ENCODE measurements at regions of chr12 and their contacts with region 1.

Region 1: GRCh38 chr12:55973598-55974307 is at the start of gene RAB5B:
- DNase-seq: peak; percentile 100
- ATAC-seq: peak; percentile 96
- H3K4me3 Mint-ChIP-seq: no peak within 1 kb of the TSS
- H3K27ac Mint-ChIP-seq: no peak within 1 kb of the TSS
- H3K4me1 Mint-ChIP-seq: peaks cover 17% of the 10 kb centered on the region
- H3K27me3 Mint-ChIP-seq: no peaks in the 10 kb centered on the region
- total RNA-seq, gene RAB5B: 51.9 to 52.9 TPM

Region 2: DNA sequence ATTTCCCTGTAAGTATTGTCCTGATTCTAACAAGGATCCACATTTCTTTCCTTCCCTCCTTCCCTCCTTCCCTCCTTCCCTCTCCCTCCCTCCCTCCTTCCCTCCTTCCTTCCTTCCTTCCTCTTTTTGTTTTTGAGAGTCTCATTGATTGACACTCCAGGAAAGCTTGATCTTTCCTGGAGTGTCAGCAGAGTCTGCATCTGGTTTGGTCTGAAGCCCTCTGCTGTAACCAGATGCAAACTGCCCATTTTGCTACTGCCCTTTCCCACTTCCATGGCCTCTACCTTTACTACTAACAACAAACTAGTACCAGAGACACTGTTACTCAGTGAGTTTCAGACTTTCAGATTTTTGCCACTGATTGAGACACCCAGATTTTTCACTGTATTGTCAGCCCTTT is 587.8 kb before region 1 on chr12:
- CTCF ChIA-PET with region 1: no interaction called
- POLR2A ChIA-PET with region 1: no interaction called
- DNase-seq: no peak
- ATAC-seq: no peak
- H3K4me3 Mint-ChIP-seq: no peak overlapping the region
- H3K27ac Mint-ChIP-seq: no peak overlapping the region
- H3K4me1 Mint-ChIP-seq: no peaks in the 10 kb centered on the region
- H3K27me3 Mint-ChIP-seq: no peaks in the 10 kb centered on the region

Region 3: DNA sequence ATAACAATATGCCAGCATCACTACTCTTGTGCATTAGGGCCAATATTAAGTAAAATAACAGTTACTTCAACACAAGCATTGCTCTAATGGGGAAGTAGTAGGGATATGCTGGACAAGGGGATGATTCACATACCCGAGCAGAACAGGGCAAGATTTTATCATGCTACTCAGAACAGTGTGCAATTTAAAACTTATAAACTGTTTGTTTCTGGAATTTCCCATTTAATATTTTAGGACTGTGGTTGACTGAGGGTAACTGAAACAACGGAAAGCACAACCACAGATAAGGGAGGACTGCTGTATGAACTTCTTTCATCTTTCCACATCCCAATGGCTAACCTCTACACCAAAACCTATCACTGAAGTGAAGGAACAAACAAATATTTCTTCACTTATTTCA is 193.1 kb before region 1 on chr12:
- CTCF ChIA-PET with region 1: no interaction called
- POLR2A ChIA-PET with region 1: no interaction called
- DNase-seq: no peak
- ATAC-seq: no peak
- H3K4me3 Mint-ChIP-seq: no peak overlapping the region
- H3K27ac Mint-ChIP-seq: peak overlapping the region; percentile 39
- H3K4me1 Mint-ChIP-seq: peaks cover 10% of the 10 kb centered on the region
- H3K27me3 Mint-ChIP-seq: no peaks in the 10 kb centered on the region

Region 4: GRCh38 chr12:55817346-55818139 is 156.2 kb before region 1 on chr12 and contains the starts of genes ORMDL2 and SARNP:
- CTCF ChIA-PET with region 1: interaction called, 5 read pairs
- POLR2A ChIA-PET with region 1: interaction called, 14 read pairs
- DNase-seq: peak; percentile 99
- ATAC-seq: peak; percentile 98
- H3K4me3 Mint-ChIP-seq: no peak within 1 kb of the TSS
- H3K27ac Mint-ChIP-seq: no peak within 1 kb of the TSS
- H3K4me1 Mint-ChIP-seq: peaks cover 46% of the 10 kb centered on the region
- H3K27me3 Mint-ChIP-seq: no peaks in the 10 kb centered on the region
- total RNA-seq, gene ORMDL2: 55.2 to 57.9 TPM
- total RNA-seq, gene SARNP: 91.1 to 94.8 TPM

Region 5: GRCh38 chr12:55926738-55927587 is 46.8 kb before region 1 on chr12:
- CTCF ChIA-PET with region 1: interaction called, 13 read pairs
- POLR2A ChIA-PET with region 1: interaction called, 7 read pairs
- DNase-seq: peak; percentile 97
- ATAC-seq: peak; percentile 43
- H3K4me3 Mint-ChIP-seq: peak overlapping the region; percentile 95
- H3K27ac Mint-ChIP-seq: peak overlapping the region; percentile 99
- H3K4me1 Mint-ChIP-seq: peaks cover 43% of the 10 kb centered on the region
- H3K27me3 Mint-ChIP-seq: no peaks in the 10 kb centered on the region

Region 6: DNA sequence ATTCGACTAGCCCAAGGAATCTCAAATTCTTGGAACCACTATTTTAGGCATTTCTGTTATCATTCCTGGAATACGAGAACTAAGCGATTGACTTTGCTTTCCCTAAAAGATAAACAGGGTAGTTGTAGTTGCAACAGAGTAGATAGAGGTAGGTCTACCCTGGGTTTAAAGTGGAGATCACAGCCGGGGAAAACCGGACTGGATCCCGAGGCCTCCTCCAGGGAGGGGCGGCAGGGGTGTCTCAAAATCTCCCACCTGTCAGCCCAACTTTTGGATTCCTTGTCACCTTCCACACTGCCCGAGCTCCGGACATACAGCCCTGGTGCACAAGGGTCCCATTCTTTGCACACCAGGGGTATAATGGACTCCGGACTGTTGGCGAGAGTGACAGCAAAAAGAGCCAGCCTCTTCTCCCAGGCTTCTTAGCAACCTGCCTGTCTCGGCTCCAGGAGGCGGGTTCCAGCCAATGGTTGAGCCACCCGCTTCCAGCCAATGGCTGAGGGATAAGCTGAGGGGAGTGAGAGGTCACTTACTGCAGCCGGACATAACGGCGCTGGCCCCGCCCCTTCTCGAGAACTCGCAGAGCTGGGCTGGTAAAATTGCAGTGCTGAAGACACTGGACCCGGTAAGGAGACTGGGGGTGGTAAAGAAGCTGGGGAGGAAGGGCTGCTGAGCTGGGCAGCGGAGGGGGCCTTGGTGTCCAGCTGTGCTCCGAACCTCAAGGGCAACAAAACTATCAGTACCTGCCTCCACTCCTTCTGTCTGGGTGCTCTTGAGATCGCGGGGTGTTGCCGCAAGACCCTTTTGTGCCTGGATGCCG is 23.2 kb after region 1 on chr12 and contains the start of gene SUOX:
- CTCF ChIA-PET with region 1: interaction called, 50 read pairs
- POLR2A ChIA-PET with region 1: interaction called, 10 read pairs
- DNase-seq: peak; percentile 63
- ATAC-seq: peak; percentile 73
- H3K4me3 Mint-ChIP-seq: peak within 1 kb of the TSS; percentile 76
- H3K27ac Mint-ChIP-seq: peak within 1 kb of the TSS; percentile 58
- H3K4me1 Mint-ChIP-seq: peaks cover 37% of the 10 kb centered on the region
- H3K27me3 Mint-ChIP-seq: no peaks in the 10 kb centered on the region
- total RNA-seq, gene SUOX: 5.8 to 6.8 TPM

Region 7: DNA sequence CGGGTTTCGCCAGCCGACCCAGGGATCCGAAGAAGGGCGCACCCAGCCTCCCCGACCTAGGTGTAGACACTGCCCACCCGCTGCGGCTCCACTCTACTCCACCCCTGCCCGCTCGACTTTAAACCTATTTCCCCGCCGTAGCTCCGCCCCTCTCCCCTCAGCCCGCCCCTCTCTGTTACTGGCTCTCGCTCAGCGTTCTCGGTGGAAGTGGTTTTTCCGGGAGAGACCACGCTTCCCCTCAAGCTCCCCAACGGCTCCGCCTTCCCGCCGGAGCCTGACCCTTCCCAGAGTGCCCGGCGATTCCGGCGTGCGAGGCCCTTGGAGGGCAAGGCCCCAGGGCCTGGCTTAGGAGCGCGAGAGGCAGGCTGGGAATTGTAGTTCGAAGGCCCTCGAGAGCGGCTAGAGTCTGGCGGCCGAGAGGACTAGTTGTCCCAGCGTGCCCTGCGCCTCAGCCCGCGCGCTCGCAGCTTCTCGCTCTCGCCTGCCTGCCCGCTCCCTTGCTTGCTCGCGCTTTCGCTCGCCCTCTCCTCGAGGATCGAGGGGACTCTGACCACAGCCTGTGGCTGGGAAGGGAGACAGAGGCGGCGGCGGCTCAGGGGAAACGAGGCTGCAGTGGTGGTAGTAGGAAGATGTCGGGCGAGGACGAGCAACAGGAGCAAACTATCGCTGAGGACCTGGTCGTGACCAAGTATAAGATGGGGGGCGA is 130.5 kb after region 1 on chr12 and contains the start of gene PA2G4:
- CTCF ChIA-PET with region 1: no interaction called
- POLR2A ChIA-PET with region 1: interaction called, 21 read pairs
- DNase-seq: peak; percentile 99
- ATAC-seq: peak; percentile 94
- H3K4me3 Mint-ChIP-seq: peak within 1 kb of the TSS; percentile 100
- H3K27ac Mint-ChIP-seq: peak within 1 kb of the TSS; percentile 98
- H3K4me1 Mint-ChIP-seq: peaks cover 64% of the 10 kb centered on the region
- H3K27me3 Mint-ChIP-seq: no peaks in the 10 kb centered on the region
- total RNA-seq, gene PA2G4: 316 to 323 TPM

Measured in activated CD8-positive, alpha-beta T cell treated with anti-CD3 and anti-CD28 coated beads, Interleukin-2, amount 10 ng/mL, durations not matched to agents 7 days and 5 days (primary cell).